Natural killer cell (primary cell): ENCODE measurements at regions of chr2 and their contacts with region 1.

Region 1: GRCh38 chr2:227766373-227766883 is 20.7 kb downstream of the SCYGR8 start:
- DNase-seq: peak; percentile 21 to 74
- ATAC-seq: peak; percentile 38 to 78 (median 65)
- H3K4me3 ChIP-seq: no peak overlapping the region
- H3K4me3 Mint-ChIP-seq: no peak overlapping the region
- H3K27ac ChIP-seq: no peak overlapping the region
- H3K27ac Mint-ChIP-seq: no peak overlapping the region
- H3K4me1 ChIP-seq: no peaks in the 10 kb centered on the region
- H3K4me1 Mint-ChIP-seq: peaks cover 0 to 9% of the 10 kb centered on the region in 2 donors
- H3K27me3 ChIP-seq: no peaks in the 10 kb centered on the region
- H3K27me3 Mint-ChIP-seq: peaks cover 0 to 2% of the 10 kb centered on the region in 2 donors
- CTCF ChIP-seq: peak; percentile 44

Region 2: DNA sequence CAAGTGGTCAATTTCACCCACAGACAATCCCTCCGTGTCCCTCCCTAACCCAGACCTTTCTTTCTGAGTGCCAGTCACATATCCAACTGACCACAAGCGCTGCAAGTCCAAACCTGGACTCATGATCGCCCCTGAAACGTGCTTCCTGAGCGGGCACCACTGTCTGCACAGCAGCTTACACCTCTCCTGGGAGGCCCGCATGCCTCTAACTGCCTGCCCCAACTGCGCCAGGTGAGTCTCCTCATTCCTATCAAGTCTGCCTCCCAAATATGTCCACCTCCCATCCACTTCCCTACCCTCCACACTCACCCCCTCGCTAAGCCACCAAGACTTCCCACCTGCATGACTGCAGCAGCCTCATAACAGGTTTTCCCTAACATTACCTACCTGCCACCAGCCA is 635.8 kb before region 1 on chr2:
- intact Hi-C with region 1: loop called (anchors 2 kb)
- DNase-seq: no peak
- ATAC-seq: no peak
- H3K4me3 ChIP-seq: no peak overlapping the region
- H3K4me3 Mint-ChIP-seq: no peak overlapping the region
- H3K27ac ChIP-seq: no peak overlapping the region
- H3K27ac Mint-ChIP-seq: no peak overlapping the region
- H3K4me1 ChIP-seq: no peaks in the 10 kb centered on the region
- H3K4me1 Mint-ChIP-seq: no peaks in the 10 kb centered on the region
- H3K27me3 ChIP-seq: no peaks in the 10 kb centered on the region
- H3K27me3 Mint-ChIP-seq: peaks cover 10 to 21% of the 10 kb centered on the region in 2 donors
- CTCF ChIP-seq: no peak

Region 3: GRCh38 chr2:227363756-227364155 is 402.7 kb before region 1 on chr2:
- intact Hi-C with region 1: loop called (anchors 10 kb)
- DNase-seq: peak in 1 of 2 donors; percentile 46
- ATAC-seq: no peak
- H3K4me3 ChIP-seq: no peak overlapping the region
- H3K4me3 Mint-ChIP-seq: no peak overlapping the region
- H3K27ac ChIP-seq: no peak overlapping the region
- H3K27ac Mint-ChIP-seq: no peak overlapping the region
- H3K4me1 ChIP-seq: no peaks in the 10 kb centered on the region
- H3K4me1 Mint-ChIP-seq: no peaks in the 10 kb centered on the region
- H3K27me3 ChIP-seq: no peaks in the 10 kb centered on the region
- H3K27me3 Mint-ChIP-seq: no peaks in the 10 kb centered on the region
- CTCF ChIP-seq: no peak

Region 4: DNA sequence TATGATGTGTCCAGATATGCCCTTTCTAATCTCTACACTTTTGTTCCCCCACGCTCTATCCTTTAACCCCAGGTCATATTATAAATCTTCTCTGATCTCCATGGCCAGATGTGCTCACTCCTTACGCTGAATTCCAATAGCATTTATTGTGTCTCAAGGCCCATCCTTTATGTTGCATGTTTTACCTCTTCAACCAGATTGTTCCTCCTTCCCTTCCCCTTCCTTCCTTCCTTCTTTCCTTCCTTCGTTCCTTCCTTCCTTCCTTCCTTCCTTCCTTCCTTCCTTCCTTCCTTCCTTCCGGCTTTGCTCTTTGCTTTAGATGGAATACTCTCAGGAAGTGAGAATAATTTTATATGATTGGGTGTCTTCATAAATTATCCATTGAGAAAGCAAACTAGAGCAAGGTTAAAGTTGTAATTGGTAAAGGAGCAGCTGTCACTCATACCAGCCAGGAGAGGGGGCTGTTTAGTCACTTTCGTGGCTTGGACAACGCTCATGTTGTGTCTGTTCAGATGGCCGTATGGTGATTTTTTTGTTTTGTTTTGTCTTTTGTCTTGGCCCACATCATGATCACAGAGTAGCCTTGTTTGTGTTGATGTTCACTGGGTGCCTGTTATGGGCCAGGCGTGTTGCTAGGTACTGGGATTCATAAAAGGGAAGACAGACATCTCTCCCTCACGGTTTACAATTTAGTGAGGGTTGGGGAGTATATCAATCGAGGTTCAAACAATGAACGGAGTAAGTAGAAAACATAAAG is 173.0 kb after region 1 on chr2:
- intact Hi-C with region 1: no loop called
- DNase-seq: no peak
- ATAC-seq: no peak
- H3K4me3 ChIP-seq: no peak overlapping the region
- H3K4me3 Mint-ChIP-seq: no peak overlapping the region
- H3K27ac ChIP-seq: no peak overlapping the region
- H3K27ac Mint-ChIP-seq: no peak overlapping the region
- H3K4me1 ChIP-seq: no peaks in the 10 kb centered on the region
- H3K4me1 Mint-ChIP-seq: no peaks in the 10 kb centered on the region
- H3K27me3 ChIP-seq: no peaks in the 10 kb centered on the region
- H3K27me3 Mint-ChIP-seq: no peaks in the 10 kb centered on the region
- CTCF ChIP-seq: no peak

Region 5: DNA sequence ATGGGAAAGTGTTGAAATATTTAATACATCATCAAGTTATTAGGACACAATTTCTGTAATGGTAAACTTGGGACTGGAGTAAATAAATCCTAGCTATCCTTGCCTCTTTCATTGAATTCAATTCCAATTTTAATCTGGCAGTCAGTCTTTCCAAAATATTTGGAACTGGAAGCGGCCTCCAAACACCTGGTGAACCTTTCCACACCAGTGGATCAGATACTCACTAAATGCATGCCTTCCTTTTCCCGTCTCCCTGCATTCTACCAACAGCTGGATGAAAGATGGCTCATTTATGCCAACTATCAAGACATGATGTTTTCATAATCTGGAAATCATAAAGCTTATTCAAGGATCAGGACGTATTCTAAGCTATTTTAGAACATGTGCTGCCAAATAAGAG is 903.3 kb after region 1 on chr2:
- intact Hi-C with region 1: no loop called
- DNase-seq: no peak
- ATAC-seq: no peak
- H3K4me3 ChIP-seq: no peak overlapping the region
- H3K4me3 Mint-ChIP-seq: no peak overlapping the region
- H3K27ac ChIP-seq: no peak overlapping the region
- H3K27ac Mint-ChIP-seq: no peak overlapping the region
- H3K4me1 ChIP-seq: no peaks in the 10 kb centered on the region
- H3K4me1 Mint-ChIP-seq: no peaks in the 10 kb centered on the region
- H3K27me3 ChIP-seq: no peaks in the 10 kb centered on the region
- H3K27me3 Mint-ChIP-seq: no peaks in the 10 kb centered on the region
- CTCF ChIP-seq: no peak